Esophagus muscularis mucosa (tissue), 4 donors: ENCODE measurements at regions of chr7 and their contacts with region 1.

Region 1: GRCh38 chr7:19663816-19664462 is 44.9 kb downstream of the POLR1F start:
- DNase-seq: no peak
- H3K4me3 ChIP-seq: no peak overlapping the region
- H3K27ac ChIP-seq: no peak overlapping the region
- H3K4me1 ChIP-seq: peaks cover 0 to 3% (median 0%) of the 10 kb centered on the region in 4 donors
- H3K27me3 ChIP-seq: no peaks in the 10 kb centered on the region
- CTCF ChIP-seq: no peak
- EP300 ChIP-seq: no peak
- POLR2A ChIP-seq: no peak

Region 2: GRCh38 chr7:17680943-17681351 is 1983.0 kb before region 1 on chr7:
- intact Hi-C with region 1: loop called (anchors 5 kb)
- DNase-seq: no peak
- H3K4me3 ChIP-seq: peak overlapping the region in 1 of 4 donors; percentile 13
- H3K27ac ChIP-seq: peak overlapping the region in 1 of 4 donors; percentile 32
- H3K4me1 ChIP-seq: peaks cover 13 to 39% (median 16%) of the 10 kb centered on the region in 4 donors
- H3K27me3 ChIP-seq: no peaks in the 10 kb centered on the region
- CTCF ChIP-seq: peak; percentile 55 to 68 (median 60)
- EP300 ChIP-seq: no peak
- POLR2A ChIP-seq: no peak

Region 3: GRCh38 chr7:19762631-19763030 is 98.7 kb after region 1 on chr7:
- intact Hi-C with region 1: no loop called
- DNase-seq: no peak
- H3K4me3 ChIP-seq: no peak overlapping the region
- H3K27ac ChIP-seq: no peak overlapping the region
- H3K4me1 ChIP-seq: no peaks in the 10 kb centered on the region
- H3K27me3 ChIP-seq: no peaks in the 10 kb centered on the region
- CTCF ChIP-seq: no peak
- EP300 ChIP-seq: no peak
- POLR2A ChIP-seq: no peak